MCF 10A (cell line): ENCODE measurements at regions of chr1 and their contacts with region 1.

Region 1: GRCh38 chr1:160607011-160607671 is 27.8 kb upstream of the CD84 start:
- DNase-seq: peak; percentile 85
- H3K4me3 Mint-ChIP-seq: no peak overlapping the region
- H3K27ac Mint-ChIP-seq: no peak overlapping the region
- H3K4me1 Mint-ChIP-seq: no peaks in the 10 kb centered on the region
- H3K27me3 Mint-ChIP-seq: peaks cover 74% of the 10 kb centered on the region
- CTCF ChIP-seq: peak; percentile 96

Region 2: GRCh38 chr1:160342953-160343869 is 263.9 kb before region 1 on chr1 and contains the starts of genes COPA and NCSTN:
- CTCF ChIA-PET with region 1: interaction called, 5 read pairs
- POLR2A ChIA-PET with region 1: interaction called, 3 read pairs
- intact Hi-C with region 1: loop called (anchors 10 kb)
- DNase-seq: peak; percentile 98
- H3K4me3 Mint-ChIP-seq: peak within 1 kb of the TSS; percentile 87
- H3K27ac Mint-ChIP-seq: peak within 1 kb of the TSS; percentile 99
- H3K4me1 Mint-ChIP-seq: peaks cover 29% of the 10 kb centered on the region
- H3K27me3 Mint-ChIP-seq: no peaks in the 10 kb centered on the region
- CTCF ChIP-seq: no peak
- total RNA-seq, gene COPA: 273 and 353 TPM in 2 replicates
- total RNA-seq, gene NCSTN: 125 and 129 TPM in 2 replicates

Region 3: GRCh38 chr1:160416369-160416768 is 190.8 kb before region 1 on chr1:
- CTCF ChIA-PET with region 1: interaction called, 30 read pairs
- POLR2A ChIA-PET with region 1: interaction called, 3 read pairs
- intact Hi-C with region 1: no loop called
- DNase-seq: peak; percentile 77
- H3K4me3 Mint-ChIP-seq: no peak overlapping the region
- H3K27ac Mint-ChIP-seq: no peak overlapping the region
- H3K4me1 Mint-ChIP-seq: peaks cover 12% of the 10 kb centered on the region
- H3K27me3 Mint-ChIP-seq: peaks cover 11% of the 10 kb centered on the region
- CTCF ChIP-seq: peak; percentile 83

Region 4: DNA sequence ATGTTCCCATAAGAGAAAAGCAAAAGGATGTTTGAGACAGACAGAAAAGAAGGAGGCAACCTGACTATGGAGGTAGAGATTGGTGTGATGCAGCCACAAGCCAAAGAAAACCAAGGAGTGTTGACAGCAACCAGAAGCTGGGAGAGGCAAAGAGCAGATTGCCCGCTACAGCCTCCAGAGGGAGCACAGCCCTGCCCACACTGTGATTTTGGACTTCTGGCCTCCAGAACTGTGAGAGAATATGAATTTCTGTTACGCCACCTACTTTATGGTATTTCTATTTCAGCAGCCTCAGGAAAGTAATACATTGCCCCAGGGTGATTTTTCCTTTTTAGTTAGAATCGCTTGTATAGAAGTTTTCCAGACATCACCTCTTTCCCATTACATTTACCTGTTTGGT is 112.5 kb before region 1 on chr1:
- CTCF ChIA-PET with region 1: interaction called, 4 read pairs
- POLR2A ChIA-PET with region 1: no interaction called
- intact Hi-C with region 1: loop called (anchors 1 kb)
- DNase-seq: peak; percentile 35
- H3K4me3 Mint-ChIP-seq: no peak overlapping the region
- H3K27ac Mint-ChIP-seq: no peak overlapping the region
- H3K4me1 Mint-ChIP-seq: no peaks in the 10 kb centered on the region
- H3K27me3 Mint-ChIP-seq: peaks cover 9% of the 10 kb centered on the region
- CTCF ChIP-seq: peak; percentile 31

Region 5: GRCh38 chr1:160550572-160551034 is 56.5 kb before region 1 on chr1:
- CTCF ChIA-PET with region 1: interaction called, 21 read pairs
- POLR2A ChIA-PET with region 1: no interaction called
- intact Hi-C with region 1: loop called (anchors 2 kb)
- DNase-seq: no peak
- H3K4me3 Mint-ChIP-seq: no peak overlapping the region
- H3K27ac Mint-ChIP-seq: no peak overlapping the region
- H3K4me1 Mint-ChIP-seq: no peaks in the 10 kb centered on the region
- H3K27me3 Mint-ChIP-seq: peaks cover 4% of the 10 kb centered on the region
- CTCF ChIP-seq: peak; percentile 21

Region 6: DNA sequence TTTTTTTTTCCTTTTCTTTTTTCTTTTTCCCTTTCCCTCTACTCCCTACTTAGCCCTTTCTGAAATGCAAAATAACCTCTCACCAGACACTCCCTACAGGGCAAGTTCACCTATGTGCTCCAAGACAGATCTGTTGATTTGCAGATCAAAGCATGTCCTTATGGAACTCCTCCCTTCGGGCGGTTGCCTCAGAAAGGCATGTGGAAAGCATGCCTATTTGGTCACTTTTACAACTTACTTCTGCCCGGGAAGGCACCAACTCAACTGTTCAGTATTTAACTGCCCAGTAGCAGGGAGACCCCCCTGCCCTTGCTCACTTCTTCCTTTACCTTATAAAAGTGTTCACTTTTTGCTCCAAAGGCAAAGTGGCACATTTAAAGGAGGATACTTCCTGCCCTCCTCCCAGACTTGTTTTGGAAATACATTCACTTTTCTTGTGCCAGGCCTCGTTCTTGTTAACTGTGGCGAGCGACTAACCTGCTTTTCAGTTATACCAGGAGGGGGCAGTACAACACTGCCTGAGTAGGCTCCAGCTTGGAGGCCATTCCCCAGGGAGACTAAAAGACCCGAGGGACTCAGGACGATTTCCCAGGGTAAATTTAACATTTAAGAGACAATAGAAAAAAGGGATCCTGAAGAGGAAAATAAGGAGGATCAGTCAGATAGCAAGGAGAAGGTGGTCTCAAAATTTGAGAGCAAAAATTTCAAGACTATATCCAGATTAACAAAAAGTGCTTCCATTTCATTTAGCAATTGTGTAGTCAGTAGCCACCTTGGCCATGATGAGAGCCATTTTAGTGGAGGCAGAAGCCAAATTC is 119.6 kb after region 1 on chr1:
- CTCF ChIA-PET with region 1: no interaction called
- POLR2A ChIA-PET with region 1: no interaction called
- intact Hi-C with region 1: no loop called
- DNase-seq: peak; percentile 90
- H3K4me3 Mint-ChIP-seq: no peak overlapping the region
- H3K27ac Mint-ChIP-seq: no peak overlapping the region
- H3K4me1 Mint-ChIP-seq: no peaks in the 10 kb centered on the region
- H3K27me3 Mint-ChIP-seq: no peaks in the 10 kb centered on the region
- CTCF ChIP-seq: peak; percentile 91